Aorta (tissue), 5 donors: ENCODE measurements at regions of chr12 and their contacts with region 1.

Region 1: GRCh38 chr12:1932264-1932777 is 13.9 kb upstream of the CACNA2D4 start:
- DNase-seq: peak in 1 of 2 donors; percentile 74
- ATAC-seq: no peak
- H3K4me3 ChIP-seq: no peak overlapping the region
- H3K27ac ChIP-seq: peak overlapping the region in 1 of 2 donors; percentile 41
- H3K4me1 ChIP-seq: no peaks in the 10 kb centered on the region
- H3K27me3 ChIP-seq: no peaks in the 10 kb centered on the region

Region 2: GRCh38 chr12:1845427-1845826 is 86.9 kb before region 1 on chr12:
- intact Hi-C with region 1: loop called in 1 of 2 experiments (anchors 5 kb)
- DNase-seq: peak in 1 of 2 donors; percentile 36
- ATAC-seq: no peak
- H3K4me3 ChIP-seq: no peak overlapping the region
- H3K27ac ChIP-seq: no peak overlapping the region
- H3K4me1 ChIP-seq: no peaks in the 10 kb centered on the region
- H3K27me3 ChIP-seq: no peaks in the 10 kb centered on the region